Stomach (tissue), 19 donors: ENCODE measurements at regions of chr3 and their contacts with region 1.

Region 1: DNA sequence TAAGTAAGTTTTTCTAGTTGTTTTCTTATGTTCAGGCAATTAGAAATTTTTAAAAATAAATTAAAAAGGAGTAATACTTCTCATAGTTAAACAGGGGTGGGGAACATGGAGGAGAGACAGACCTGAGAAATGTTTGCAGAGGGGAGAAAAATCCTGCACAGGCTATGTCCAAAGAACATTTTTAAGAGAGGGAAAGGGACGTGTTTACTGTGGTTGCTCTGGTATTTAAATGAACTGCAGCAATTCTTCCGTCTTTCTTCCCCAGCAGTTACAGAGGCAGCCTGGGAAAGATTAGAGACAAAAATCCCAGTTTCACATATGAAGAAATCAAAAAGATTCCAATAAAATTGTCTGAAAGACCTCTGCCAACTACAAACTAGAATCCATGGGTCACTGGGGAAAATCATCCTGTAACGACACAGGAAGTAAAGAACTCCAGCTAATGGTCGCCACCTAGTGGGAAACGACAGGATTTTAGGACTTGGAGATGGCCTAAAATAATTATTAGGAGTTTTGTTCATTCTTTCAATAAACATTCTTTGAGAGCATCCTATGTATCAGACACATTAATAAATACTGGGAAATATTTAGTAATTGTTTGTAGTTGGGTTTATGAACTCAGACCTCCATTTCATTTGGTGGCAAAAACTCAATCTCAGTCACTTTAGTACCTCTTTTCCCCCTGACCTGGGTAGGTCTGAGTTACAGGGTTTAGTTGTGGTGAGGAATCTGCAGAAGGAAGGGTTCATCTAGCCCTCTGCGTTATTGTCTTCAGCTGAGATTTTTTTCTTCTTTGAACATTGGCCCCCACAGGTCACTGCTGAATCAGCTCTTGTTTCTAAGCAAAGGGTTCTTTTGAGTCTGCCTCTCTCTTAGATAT is 69.9 kb upstream of the GOLIM4 start:
- DNase-seq: peak; percentile 66 to 91
- H3K4me3 ChIP-seq: no peak overlapping the region
- H3K27ac ChIP-seq: no peak overlapping the region
- H3K4me1 ChIP-seq: peaks cover 0 to 14% (median 3%) of the 10 kb centered on the region in 4 donors
- H3K27me3 ChIP-seq: no peaks in the 10 kb centered on the region
- CTCF ChIP-seq: peak in 5 of 7 experiments; percentile 53 to 85 (median 68)
- EP300 ChIP-seq: no peak
- POLR2A ChIP-seq: no peak

Region 2: GRCh38 chr3:167740961-167741587 is 424.6 kb before region 1 on chr3:
- intact Hi-C with region 1: no loop called
- DNase-seq: peak in 1 of 2 donors; percentile 72
- H3K4me3 ChIP-seq: no peak overlapping the region
- H3K27ac ChIP-seq: no peak overlapping the region
- H3K4me1 ChIP-seq: peaks cover 4 to 13% (median 8%) of the 10 kb centered on the region in 4 donors
- H3K27me3 ChIP-seq: no peaks in the 10 kb centered on the region
- CTCF ChIP-seq: no peak
- EP300 ChIP-seq: no peak
- POLR2A ChIP-seq: no peak

Region 3: DNA sequence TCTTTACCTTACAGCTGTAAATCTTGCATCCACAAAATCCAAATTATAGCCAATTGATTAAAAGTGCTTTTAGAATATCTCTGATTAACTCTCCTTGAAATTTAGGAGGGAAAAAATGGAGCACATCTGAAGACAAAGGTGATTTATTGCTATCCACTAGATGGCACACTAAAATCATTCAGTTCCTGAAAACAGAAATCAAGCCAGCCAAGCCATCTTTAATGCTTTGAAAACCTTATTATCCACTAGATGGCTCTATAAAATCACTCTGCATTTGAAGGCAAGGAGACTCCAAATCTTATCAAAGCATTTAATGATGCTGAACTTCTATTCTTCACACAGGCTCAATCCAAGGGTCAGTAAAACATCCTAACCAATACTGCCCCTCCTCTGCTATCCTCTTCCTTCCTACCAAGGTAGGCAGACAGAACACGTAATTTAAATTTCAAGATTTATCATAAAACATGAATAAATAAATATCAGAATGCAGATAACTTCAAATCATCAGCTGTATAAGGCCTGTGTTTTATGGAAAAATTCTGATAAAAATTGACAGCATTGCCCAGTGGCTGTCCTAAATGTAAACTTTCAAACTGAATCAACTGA is 118.3 kb before region 1 on chr3:
- intact Hi-C with region 1: loop called (anchors 5 kb)
- DNase-seq: peak in 1 of 2 donors; percentile 89
- H3K4me3 ChIP-seq: no peak overlapping the region
- H3K27ac ChIP-seq: no peak overlapping the region
- H3K4me1 ChIP-seq: peaks cover 14 to 77% (median 37%) of the 10 kb centered on the region in 4 donors
- H3K27me3 ChIP-seq: no peaks in the 10 kb centered on the region
- CTCF ChIP-seq: peak in 5 of 7 experiments; percentile 53 to 98 (median 80)
- EP300 ChIP-seq: no peak
- POLR2A ChIP-seq: no peak